HepG2 (cell line): ENCODE measurements at regions of chr1 and their contacts with region 1.

Region 1: DNA sequence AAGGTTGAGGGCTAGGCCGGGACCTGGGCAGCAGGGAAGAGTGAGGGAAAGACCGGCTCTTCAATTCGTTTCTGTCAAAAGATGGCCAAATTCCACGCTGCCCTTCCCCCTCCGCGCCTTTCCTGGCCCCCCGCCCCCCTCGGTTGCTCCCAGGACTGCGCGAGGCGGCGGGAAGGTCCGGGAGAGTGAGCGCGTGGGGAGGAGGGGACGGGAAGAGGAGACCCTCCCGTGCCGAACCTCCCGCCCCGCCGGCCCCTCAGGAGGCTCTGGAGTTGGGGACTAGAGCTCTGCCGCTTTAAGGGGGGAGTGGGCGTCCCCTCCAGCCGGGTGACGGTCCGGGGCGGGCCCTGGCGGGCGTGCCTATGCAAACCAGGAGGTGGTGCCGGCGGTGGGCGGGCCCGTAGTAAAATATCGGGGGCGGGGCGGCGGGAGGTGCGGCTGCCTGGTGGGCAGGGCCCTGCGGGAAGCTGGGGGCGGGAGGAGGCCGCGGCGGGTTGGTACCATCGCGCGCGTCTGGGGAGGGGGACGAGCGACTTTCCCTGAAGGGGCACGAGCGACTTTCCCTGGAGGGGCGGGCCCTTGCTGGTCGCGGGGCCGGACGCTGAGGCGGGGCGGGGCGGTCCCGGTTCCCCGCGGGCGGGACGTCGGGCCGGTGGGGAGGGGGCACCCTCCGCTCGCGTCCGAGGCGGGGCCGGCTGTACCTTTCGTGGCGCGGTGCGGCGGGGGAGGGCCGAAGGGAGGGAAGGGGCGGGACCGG is 58.2 kb downstream of the BCL9 start:
- DNase-seq: peak; percentile 81
- ATAC-seq: peak; percentile 94
- H3K4me3 ChIP-seq: peak overlapping the region; percentile 65 to 91 (median 81)
- H3K27ac ChIP-seq: peak overlapping the region; percentile 74
- H3K4me1 ChIP-seq: peaks cover 34% of the 10 kb centered on the region
- H3K27me3 ChIP-seq: peaks cover 0 to 10% of the 10 kb centered on the region in 2 experiments; a peak in 1 of 5 replicates
- CTCF ChIP-seq: no peak
- EP300 ChIP-seq: no peak
- POLR2A ChIP-seq: peak; percentile 66 to 88; a peak in 3 of 4 replicates
- RAD21 ChIP-seq: no peak

Region 2: GRCh38 chr1:147478556-147478955 is 121.0 kb before region 1 on chr1:
- CTCF ChIA-PET with region 1: no interaction called
- POLR2A ChIA-PET with region 1: no interaction called
- in situ Hi-C with region 1: no loop called
- intact Hi-C with region 1: no loop called
- DNase-seq: no peak
- ATAC-seq: no peak
- H3K4me3 ChIP-seq: no peak overlapping the region
- H3K27ac ChIP-seq: no peak overlapping the region
- H3K4me1 ChIP-seq: peaks cover 18% of the 10 kb centered on the region
- H3K27me3 ChIP-seq: no peaks in the 10 kb centered on the region
- CTCF ChIP-seq: no peak
- EP300 ChIP-seq: no peak
- POLR2A ChIP-seq: no peak
- RAD21 ChIP-seq: no peak

Region 3: GRCh38 chr1:147558045-147558444 is 41.5 kb before region 1 on chr1:
- CTCF ChIA-PET with region 1: no interaction called
- POLR2A ChIA-PET with region 1: no interaction called
- in situ Hi-C with region 1: loop called (anchors 5 kb)
- intact Hi-C with region 1: no loop called
- DNase-seq: no peak
- ATAC-seq: no peak
- H3K4me3 ChIP-seq: no peak overlapping the region
- H3K27ac ChIP-seq: no peak overlapping the region
- H3K4me1 ChIP-seq: peaks cover 1% of the 10 kb centered on the region; the same call in 1 of the 2 replicates
- H3K27me3 ChIP-seq: no peaks in the 10 kb centered on the region; a peak in 1 of 5 replicates
- CTCF ChIP-seq: no peak
- EP300 ChIP-seq: no peak
- POLR2A ChIP-seq: no peak
- RAD21 ChIP-seq: no peak

Region 4: GRCh38 chr1:147585640-147586383 is 13.7 kb before region 1 on chr1:
- CTCF ChIA-PET with region 1: no interaction called
- POLR2A ChIA-PET with region 1: interaction called, 14 read pairs
- in situ Hi-C with region 1: no loop called
- intact Hi-C with region 1: loop called (anchors 1 kb)
- DNase-seq: no peak
- ATAC-seq: no peak
- H3K4me3 ChIP-seq: no peak overlapping the region
- H3K27ac ChIP-seq: no peak overlapping the region
- H3K4me1 ChIP-seq: peaks cover 40% of the 10 kb centered on the region
- H3K27me3 ChIP-seq: no peaks in the 10 kb centered on the region; a peak in 1 of 5 replicates
- CTCF ChIP-seq: no peak
- EP300 ChIP-seq: no peak
- POLR2A ChIP-seq: no peak
- RAD21 ChIP-seq: no peak

Region 5: GRCh38 chr1:147627435-147628110 is 28.0 kb after region 1 on chr1:
- CTCF ChIA-PET with region 1: interaction called, 15 read pairs
- POLR2A ChIA-PET with region 1: interaction called, 4 read pairs
- in situ Hi-C with region 1: no loop called
- intact Hi-C with region 1: loop called (anchors 1 kb)
- DNase-seq: peak; percentile 40
- ATAC-seq: peak; percentile 80
- H3K4me3 ChIP-seq: no peak overlapping the region
- H3K27ac ChIP-seq: no peak overlapping the region
- H3K4me1 ChIP-seq: peaks cover 45% of the 10 kb centered on the region
- H3K27me3 ChIP-seq: no peaks in the 10 kb centered on the region; a peak in 1 of 5 replicates
- CTCF ChIP-seq: peak; percentile 80
- EP300 ChIP-seq: no peak
- POLR2A ChIP-seq: no peak
- RAD21 ChIP-seq: peak; percentile 79